CD8-positive, alpha-beta memory T cell (primary cell): ENCODE measurements at regions of chr20 and their contacts with region 1.

Region 1: DNA sequence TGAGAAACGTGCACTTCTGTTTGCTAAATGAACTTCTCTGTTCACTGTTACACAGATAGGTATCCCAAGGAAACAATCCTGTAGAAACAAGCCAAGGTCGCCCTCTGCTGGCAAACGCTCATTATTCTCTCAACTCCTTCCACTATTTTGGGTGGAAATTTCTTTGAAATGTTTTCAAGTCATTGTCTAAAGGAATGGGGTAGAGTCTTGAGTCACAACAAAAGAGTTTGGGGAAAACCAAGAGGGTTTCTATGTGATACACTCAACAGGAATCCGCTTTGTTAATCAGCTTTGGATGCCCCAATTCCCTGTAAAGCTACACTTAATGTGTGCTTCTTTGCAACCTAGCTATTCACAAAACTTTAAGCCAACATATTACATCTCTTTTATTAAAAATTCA is 4.6 kb upstream of the RAE1 start:
- DNase-seq: peak; percentile 33 to 70 (median 49)
- H3K4me3 ChIP-seq: no peak overlapping the region
- H3K4me3 Mint-ChIP-seq: peak overlapping the region in 1 of 7 donors; percentile 19
- H3K27ac ChIP-seq: no peak overlapping the region
- H3K27ac Mint-ChIP-seq: no peak overlapping the region
- H3K4me1 ChIP-seq: peaks cover under 1% of the 10 kb centered on the region
- H3K4me1 Mint-ChIP-seq: peaks cover 4 to 10% (median 7%) of the 10 kb centered on the region in 3 donors
- H3K27me3 ChIP-seq: no peaks in the 10 kb centered on the region
- H3K27me3 Mint-ChIP-seq: peaks cover 7 to 21% of the 10 kb centered on the region in 2 donors

Region 2: DNA sequence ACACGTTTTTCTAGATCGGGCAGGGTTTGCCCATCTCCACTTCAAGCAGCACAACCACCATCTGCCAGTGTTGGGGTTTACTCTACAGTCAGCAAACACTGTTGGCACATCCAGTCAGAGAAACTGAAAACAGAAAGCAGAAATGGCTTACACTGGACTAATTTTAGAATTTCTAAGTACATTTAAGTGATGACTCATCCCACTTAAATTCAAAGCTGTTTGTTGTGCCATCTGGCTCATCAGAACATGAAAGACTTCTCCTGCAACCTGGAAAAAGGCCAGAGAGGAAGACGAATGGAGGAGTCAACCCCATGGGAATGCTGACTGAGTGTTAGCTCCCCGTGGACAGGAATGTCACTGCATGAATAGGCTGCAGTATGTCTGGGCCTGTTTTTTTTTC is 791.6 kb before region 1 on chr20:
- CTCF ChIA-PET with region 1: interaction called, 10 read pairs
- POLR2A ChIA-PET with region 1: no interaction called
- DNase-seq: no peak
- H3K4me3 ChIP-seq: no peak overlapping the region
- H3K4me3 Mint-ChIP-seq: no peak overlapping the region
- H3K27ac ChIP-seq: no peak overlapping the region
- H3K27ac Mint-ChIP-seq: no peak overlapping the region
- H3K4me1 ChIP-seq: no peaks in the 10 kb centered on the region
- H3K4me1 Mint-ChIP-seq: no peaks in the 10 kb centered on the region
- H3K27me3 ChIP-seq: no peaks in the 10 kb centered on the region
- H3K27me3 Mint-ChIP-seq: peaks cover 0 to 3% of the 10 kb centered on the region in 2 donors

Region 3: GRCh38 chr20:56893226-56893912 is 453.1 kb before region 1 on chr20:
- CTCF ChIA-PET with region 1: no interaction called
- POLR2A ChIA-PET with region 1: no interaction called
- DNase-seq: peak in 1 of 5 donors; percentile 4
- H3K4me3 ChIP-seq: no peak overlapping the region
- H3K4me3 Mint-ChIP-seq: peak overlapping the region in 2 of 7 donors; percentile 2 to 25
- H3K27ac ChIP-seq: no peak overlapping the region
- H3K27ac Mint-ChIP-seq: peak overlapping the region in 1 of 8 donors; percentile 64
- H3K4me1 ChIP-seq: no peaks in the 10 kb centered on the region
- H3K4me1 Mint-ChIP-seq: peaks cover 0 to 4% (median 0%) of the 10 kb centered on the region in 3 donors
- H3K27me3 ChIP-seq: no peaks in the 10 kb centered on the region
- H3K27me3 Mint-ChIP-seq: peaks cover 0 to 5% of the 10 kb centered on the region in 2 donors

Region 4: GRCh38 chr20:57260934-57261870 is 85.3 kb before region 1 on chr20:
- CTCF ChIA-PET with region 1: no interaction called
- POLR2A ChIA-PET with region 1: no interaction called
- DNase-seq: no peak
- H3K4me3 ChIP-seq: no peak overlapping the region
- H3K4me3 Mint-ChIP-seq: no peak overlapping the region
- H3K27ac ChIP-seq: no peak overlapping the region
- H3K27ac Mint-ChIP-seq: no peak overlapping the region
- H3K4me1 ChIP-seq: no peaks in the 10 kb centered on the region
- H3K4me1 Mint-ChIP-seq: peaks cover 0 to 2% (median 0%) of the 10 kb centered on the region in 3 donors
- H3K27me3 ChIP-seq: peaks cover 23% of the 10 kb centered on the region
- H3K27me3 Mint-ChIP-seq: peaks cover 24 to 73% of the 10 kb centered on the region in 2 donors

Region 5: GRCh38 chr20:57308813-57309271 is 37.6 kb before region 1 on chr20:
- CTCF ChIA-PET with region 1: no interaction called
- POLR2A ChIA-PET with region 1: no interaction called
- DNase-seq: no peak
- H3K4me3 ChIP-seq: no peak overlapping the region
- H3K4me3 Mint-ChIP-seq: no peak overlapping the region
- H3K27ac ChIP-seq: no peak overlapping the region
- H3K27ac Mint-ChIP-seq: no peak overlapping the region
- H3K4me1 ChIP-seq: no peaks in the 10 kb centered on the region
- H3K4me1 Mint-ChIP-seq: no peaks in the 10 kb centered on the region
- H3K27me3 ChIP-seq: peaks cover 4% of the 10 kb centered on the region
- H3K27me3 Mint-ChIP-seq: peaks cover 7 to 35% of the 10 kb centered on the region in 2 donors